Posterior cingulate gyrus (tissue), 11 donors: ENCODE measurements at regions of chr7 and their contacts with region 1.

Region 1: DNA sequence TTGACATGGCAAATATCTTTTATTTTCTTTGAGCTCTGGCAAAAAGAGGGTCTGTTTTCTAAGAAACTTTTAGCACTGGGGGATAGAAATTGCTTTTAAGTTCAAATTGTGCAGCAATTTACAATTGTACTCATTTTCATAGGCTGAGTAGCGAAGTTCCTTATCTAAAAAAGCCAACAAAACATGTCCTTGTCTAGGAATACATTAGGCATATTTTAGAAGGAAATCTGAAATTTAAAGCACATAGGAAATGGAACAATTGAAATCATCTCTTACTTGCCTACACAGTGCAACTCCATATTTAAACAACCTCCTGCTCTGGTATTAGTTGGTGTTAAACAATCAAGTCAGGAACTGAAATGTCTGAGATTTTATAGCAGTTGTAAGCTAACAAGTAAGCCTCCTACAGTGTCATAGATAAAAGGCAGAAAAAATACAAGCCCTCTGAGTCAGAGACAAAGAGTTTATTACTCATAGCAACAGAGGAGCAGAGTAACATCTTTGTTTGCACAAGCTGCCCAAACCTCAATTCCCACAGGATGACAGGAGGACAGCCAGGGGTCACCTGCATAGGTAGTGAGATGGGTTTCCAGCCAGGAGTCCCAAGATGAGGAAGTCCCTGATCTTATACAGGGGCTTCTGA is 280.2 kb upstream of the HGF start:
- DNase-seq: peak in 1 of 10 donors; percentile 63

Region 2: DNA sequence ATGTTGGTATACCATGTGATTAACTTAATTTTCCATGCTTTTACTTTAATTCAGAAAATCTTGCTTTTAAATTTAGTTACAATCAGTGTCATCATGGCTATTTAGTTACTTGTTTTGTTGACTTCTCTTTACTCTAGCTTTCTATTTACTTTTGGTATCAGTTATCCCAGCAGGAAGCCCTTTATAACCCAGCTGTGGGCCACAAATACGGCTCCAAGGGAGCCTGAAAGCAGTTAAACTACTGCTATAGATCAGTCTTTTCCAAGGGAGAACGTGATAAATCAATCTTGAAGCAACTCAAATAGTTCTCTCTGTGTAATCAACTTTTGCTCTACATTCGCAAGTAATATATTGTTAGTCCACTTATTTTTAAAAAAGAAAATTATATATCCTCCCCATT is 106.2 kb after region 1 on chr7:
- intact Hi-C with region 1: loop called (anchors 10 kb)
- DNase-seq: no peak